ENCODE measurements at regions of chr2 and their contacts with region 1.

Region 1: GRCh38 chr2:109510136-109511028 is 103.4 kb downstream of the SEPTIN10 start:
- DNase-seq: peak; percentile 62 to 72
- H3K4me3 ChIP-seq: no peak overlapping the region
- H3K27ac ChIP-seq: no peak overlapping the region
- H3K4me1 ChIP-seq: no peaks in the 10 kb centered on the region
- H3K27me3 ChIP-seq: no peaks in the 10 kb centered on the region
- CTCF ChIP-seq: peak; percentile 85 to 94 (median 89)
- POLR2A ChIP-seq: no peak

Region 2: DNA sequence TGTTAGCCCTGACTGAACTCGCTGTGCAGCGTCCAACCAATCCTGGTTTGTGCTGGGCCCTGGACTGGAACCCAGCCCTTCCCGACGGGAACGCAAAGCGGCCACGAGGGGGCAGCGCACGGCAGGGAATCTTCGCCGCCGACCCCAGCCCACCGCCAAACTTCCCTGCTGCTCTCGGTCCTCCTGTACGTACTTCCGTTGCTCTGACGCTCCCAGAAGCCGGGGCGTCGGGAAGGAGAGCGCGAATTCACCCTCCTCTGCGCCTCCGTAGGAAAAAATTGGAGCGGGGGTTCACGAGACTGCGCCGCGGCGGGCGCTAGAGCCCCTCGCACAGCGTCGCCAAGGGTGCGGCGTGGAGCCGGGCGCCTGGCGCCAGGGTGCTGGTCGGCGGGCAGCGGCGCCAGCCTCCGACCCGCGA is 382.3 kb before region 1 on chr2:
- intact Hi-C with region 1: loop called (anchors 10 kb)
- DNase-seq: peak in 1 of 2 donors; percentile 44
- H3K4me3 ChIP-seq: peak overlapping the region; percentile 68 to 79 (median 75)
- H3K27ac ChIP-seq: peak overlapping the region; percentile 41 to 42
- H3K4me1 ChIP-seq: peaks cover 0 to 4% of the 10 kb centered on the region in 2 donors
- H3K27me3 ChIP-seq: peaks cover 0 to 4% of the 10 kb centered on the region in 2 donors
- CTCF ChIP-seq: peak; percentile 80 to 91 (median 85)
- POLR2A ChIP-seq: no peak

Region 3: DNA sequence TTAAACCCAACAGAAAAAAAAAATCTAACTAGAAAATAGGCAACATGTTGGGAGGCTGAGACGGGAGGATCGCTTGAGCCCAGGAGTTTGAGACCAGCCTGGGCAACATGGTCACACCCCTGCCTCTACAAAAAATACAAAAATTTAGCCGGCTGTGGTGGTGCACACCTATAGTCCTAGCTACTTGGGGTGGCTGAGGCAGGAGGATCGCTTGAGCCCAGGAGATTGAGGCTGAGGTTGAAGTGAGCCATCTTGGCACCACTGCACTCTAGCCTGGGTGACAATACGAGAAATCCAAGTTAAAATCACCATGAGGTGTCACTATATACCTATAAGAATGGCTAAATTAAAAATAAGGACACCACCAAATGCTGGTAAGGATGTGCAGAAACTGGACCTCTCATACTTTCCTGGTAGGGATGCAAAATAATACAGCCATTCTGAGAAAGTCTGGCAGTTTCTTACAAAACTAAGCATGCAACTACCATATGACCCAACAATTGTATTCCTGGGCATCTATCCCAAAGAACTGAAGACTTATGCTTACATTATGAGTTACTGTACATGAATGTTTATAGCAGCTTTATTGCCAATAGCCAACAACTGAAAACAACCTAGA is 101.2 kb after region 1 on chr2:
- intact Hi-C with region 1: no loop called
- DNase-seq: no peak
- H3K4me3 ChIP-seq: no peak overlapping the region
- H3K27ac ChIP-seq: peak overlapping the region in 1 of 2 donors; percentile 14
- H3K4me1 ChIP-seq: peaks cover 0 to 24% of the 10 kb centered on the region in 2 donors
- H3K27me3 ChIP-seq: no peaks in the 10 kb centered on the region
- CTCF ChIP-seq: peak in 1 of 3 donors; percentile 28
- POLR2A ChIP-seq: no peak

Measured in breast epithelium (tissue), 4 donors.